ENCODE measurements at regions of chr2 and their contacts with region 1.

Region 1: GRCh38 chr2:38947240-38948239 is 57.9 kb downstream of the ARHGEF33 start:
- DNase-seq: peak; percentile 81 to 83
- H3K4me3 ChIP-seq: no peak overlapping the region
- H3K4me3 Mint-ChIP-seq: no peak overlapping the region
- H3K27ac Mint-ChIP-seq: no peak overlapping the region
- H3K4me1 ChIP-seq: peaks cover 21% of the 10 kb centered on the region
- H3K4me1 Mint-ChIP-seq: peaks cover 22% of the 10 kb centered on the region
- H3K27me3 ChIP-seq: no peaks in the 10 kb centered on the region
- H3K27me3 Mint-ChIP-seq: no peaks in the 10 kb centered on the region
- CTCF ChIP-seq: peak; percentile 80 to 85

Region 2: DNA sequence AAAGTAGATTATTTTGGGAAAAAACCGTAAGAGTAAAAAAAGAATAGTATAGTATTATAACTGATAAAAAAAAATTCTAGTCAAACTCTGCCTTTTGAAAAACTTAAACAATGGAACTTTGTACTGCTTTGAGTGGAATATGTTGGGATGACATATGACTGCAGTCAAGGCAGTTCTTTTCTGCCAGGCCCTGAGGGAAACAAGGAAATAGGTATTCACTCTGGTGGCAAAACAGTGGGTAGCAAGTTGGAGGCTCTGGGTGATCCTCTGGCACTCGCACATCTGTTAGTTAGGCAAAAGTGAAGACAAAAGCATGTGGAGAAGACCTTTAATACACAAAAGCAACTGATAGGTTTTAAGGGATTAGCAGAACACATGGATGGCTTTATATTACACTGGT is 44.4 kb after region 1 on chr2:
- CTCF ChIA-PET with region 1: interaction called, 12 read pairs
- POLR2A ChIA-PET with region 1: no interaction called
- intact Hi-C with region 1: no loop called
- DNase-seq: no peak
- H3K4me3 ChIP-seq: no peak overlapping the region
- H3K4me3 Mint-ChIP-seq: no peak overlapping the region
- H3K27ac Mint-ChIP-seq: no peak overlapping the region
- H3K4me1 ChIP-seq: no peaks in the 10 kb centered on the region
- H3K4me1 Mint-ChIP-seq: no peaks in the 10 kb centered on the region
- H3K27me3 ChIP-seq: no peaks in the 10 kb centered on the region
- H3K27me3 Mint-ChIP-seq: no peaks in the 10 kb centered on the region
- CTCF ChIP-seq: no peak

Region 3: GRCh38 chr2:39033980-39034379 is 86.4 kb after region 1 on chr2:
- CTCF ChIA-PET with region 1: interaction called, 49 read pairs
- POLR2A ChIA-PET with region 1: no interaction called
- intact Hi-C with region 1: loop called (anchors 1 kb)
- DNase-seq: no peak
- H3K4me3 ChIP-seq: no peak overlapping the region
- H3K4me3 Mint-ChIP-seq: no peak overlapping the region
- H3K27ac Mint-ChIP-seq: no peak overlapping the region
- H3K4me1 ChIP-seq: peaks cover 12% of the 10 kb centered on the region
- H3K4me1 Mint-ChIP-seq: peaks cover 10% of the 10 kb centered on the region
- H3K27me3 ChIP-seq: no peaks in the 10 kb centered on the region
- H3K27me3 Mint-ChIP-seq: no peaks in the 10 kb centered on the region
- CTCF ChIP-seq: no peak

Region 4: DNA sequence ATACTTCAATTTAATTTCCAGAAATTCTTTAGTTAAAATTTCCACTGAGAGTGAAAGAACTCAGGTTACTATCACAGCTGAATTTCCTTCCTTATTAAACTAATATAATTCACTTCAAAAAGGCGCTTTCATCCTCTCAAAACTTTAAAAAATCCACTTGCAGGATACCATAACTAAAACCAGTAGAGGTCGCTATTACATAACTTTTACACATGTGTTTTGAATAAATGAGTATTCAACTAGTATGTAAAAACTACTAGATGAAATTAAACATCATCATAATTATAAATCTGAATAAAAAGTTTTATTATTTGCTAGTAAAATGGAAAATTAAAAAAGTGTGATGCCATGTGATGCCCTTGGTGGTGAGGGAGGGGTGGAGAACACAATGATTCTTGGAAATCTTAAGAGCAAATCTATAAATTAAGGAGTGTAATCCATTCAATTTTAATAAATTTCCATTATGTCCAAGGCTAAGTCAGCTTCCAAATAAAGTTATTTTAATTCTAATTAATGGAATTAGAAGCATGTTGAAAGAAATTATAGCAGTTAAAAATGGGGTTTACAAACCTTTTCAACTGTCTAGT is 111.9 kb after region 1 on chr2:
- CTCF ChIA-PET with region 1: no interaction called
- POLR2A ChIA-PET with region 1: no interaction called
- intact Hi-C with region 1: no loop called
- DNase-seq: peak in 1 of 2 experiments; percentile 36
- H3K4me3 ChIP-seq: no peak overlapping the region
- H3K4me3 Mint-ChIP-seq: no peak overlapping the region
- H3K27ac Mint-ChIP-seq: no peak overlapping the region
- H3K4me1 ChIP-seq: no peaks in the 10 kb centered on the region
- H3K4me1 Mint-ChIP-seq: peaks cover 6% of the 10 kb centered on the region
- H3K27me3 ChIP-seq: no peaks in the 10 kb centered on the region
- H3K27me3 Mint-ChIP-seq: no peaks in the 10 kb centered on the region
- CTCF ChIP-seq: peak; percentile 52 to 53

Region 5: GRCh38 chr2:39227628-39228412 is 280.3 kb after region 1 on chr2:
- CTCF ChIA-PET with region 1: interaction called, 69 read pairs
- POLR2A ChIA-PET with region 1: no interaction called
- intact Hi-C with region 1: loop called (anchors 1 kb)
- DNase-seq: peak; percentile 76 to 83
- H3K4me3 ChIP-seq: no peak overlapping the region
- H3K4me3 Mint-ChIP-seq: peak overlapping the region; percentile 5
- H3K27ac Mint-ChIP-seq: no peak overlapping the region
- H3K4me1 ChIP-seq: peaks cover 10% of the 10 kb centered on the region
- H3K4me1 Mint-ChIP-seq: peaks cover 17% of the 10 kb centered on the region
- H3K27me3 ChIP-seq: no peaks in the 10 kb centered on the region
- H3K27me3 Mint-ChIP-seq: no peaks in the 10 kb centered on the region
- CTCF ChIP-seq: peak; percentile 84 to 94

Measured in Caco-2 (cell line).